ENCODE measurements at regions of chr1 and their contacts with region 1.

Region 1: GRCh38 chr1:92994105-92994712 is 32.9 kb upstream of the DIPK1A start:
- DNase-seq: peak; percentile 20 to 91 (median 68)
- ATAC-seq: peak; percentile 92
- H3K4me3 ChIP-seq: no peak overlapping the region
- H3K4me3 Mint-ChIP-seq: peak overlapping the region; percentile 56
- H3K27ac ChIP-seq: no peak overlapping the region
- H3K27ac Mint-ChIP-seq: peak overlapping the region; percentile 73
- H3K4me1 ChIP-seq: peaks cover 47% of the 10 kb centered on the region
- H3K4me1 Mint-ChIP-seq: peaks cover 48% of the 10 kb centered on the region
- H3K27me3 ChIP-seq: no peaks in the 10 kb centered on the region
- H3K27me3 Mint-ChIP-seq: no peaks in the 10 kb centered on the region
- CTCF ChIP-seq: peak; percentile 91

Region 2: GRCh38 chr1:92298573-92299476 is 695.4 kb before region 1 on chr1 and contains the starts of genes GLMN and RPAP2:
- CTCF ChIA-PET with region 1: interaction called, 3 read pairs
- POLR2A ChIA-PET with region 1: no interaction called
- intact Hi-C with region 1: loop called in 1 of 2 experiments (anchors 10 kb)
- DNase-seq: peak; percentile 40 to 89 (median 60)
- ATAC-seq: peak; percentile 96
- H3K4me3 ChIP-seq: peak within 1 kb of the TSS; percentile 98
- H3K4me3 Mint-ChIP-seq: peak within 1 kb of the TSS; percentile 100
- H3K27ac ChIP-seq: peak within 1 kb of the TSS; percentile 86 to 93
- H3K27ac Mint-ChIP-seq: peak within 1 kb of the TSS; percentile 96
- H3K4me1 ChIP-seq: peaks cover 12% of the 10 kb centered on the region
- H3K4me1 Mint-ChIP-seq: peaks cover 54% of the 10 kb centered on the region
- H3K27me3 ChIP-seq: no peaks in the 10 kb centered on the region
- H3K27me3 Mint-ChIP-seq: no peaks in the 10 kb centered on the region
- CTCF ChIP-seq: no peak
- total RNA-seq, gene GLMN: 7.7 to 11.7 TPM
- total RNA-seq, gene RPAP2: 23.4 to 26.5 TPM

Region 3: GRCh38 chr1:92317836-92318493 is 676.2 kb before region 1 on chr1:
- CTCF ChIA-PET with region 1: no interaction called
- POLR2A ChIA-PET with region 1: no interaction called
- intact Hi-C with region 1: no loop called
- DNase-seq: peak in 4 of 14 experiments; percentile 11 to 72 (median 60)
- ATAC-seq: peak; percentile 39
- H3K4me3 ChIP-seq: no peak overlapping the region
- H3K4me3 Mint-ChIP-seq: peak overlapping the region; percentile 30
- H3K27ac ChIP-seq: peak overlapping the region in 1 of 2 donors; percentile 40
- H3K27ac Mint-ChIP-seq: peak overlapping the region; percentile 85
- H3K4me1 ChIP-seq: peaks cover 38% of the 10 kb centered on the region
- H3K4me1 Mint-ChIP-seq: peaks cover 59% of the 10 kb centered on the region
- H3K27me3 ChIP-seq: no peaks in the 10 kb centered on the region
- H3K27me3 Mint-ChIP-seq: no peaks in the 10 kb centered on the region
- CTCF ChIP-seq: no peak

Region 4: GRCh38 chr1:92792340-92792782 is 201.8 kb before region 1 on chr1:
- CTCF ChIA-PET with region 1: no interaction called
- POLR2A ChIA-PET with region 1: no interaction called
- intact Hi-C with region 1: no loop called
- DNase-seq: no peak
- ATAC-seq: no peak
- H3K4me3 ChIP-seq: no peak overlapping the region
- H3K4me3 Mint-ChIP-seq: no peak overlapping the region
- H3K27ac ChIP-seq: no peak overlapping the region
- H3K27ac Mint-ChIP-seq: no peak overlapping the region
- H3K4me1 ChIP-seq: no peaks in the 10 kb centered on the region
- H3K4me1 Mint-ChIP-seq: no peaks in the 10 kb centered on the region
- H3K27me3 ChIP-seq: peaks cover 4 to 8% of the 10 kb centered on the region in 2 experiments
- H3K27me3 Mint-ChIP-seq: peaks cover 32% of the 10 kb centered on the region
- CTCF ChIP-seq: no peak

Region 5: GRCh38 chr1:92858564-92859399 is 135.4 kb before region 1 on chr1:
- CTCF ChIA-PET with region 1: interaction called, 47 read pairs
- POLR2A ChIA-PET with region 1: interaction called, 12 read pairs
- intact Hi-C with region 1: loop called (anchors 1 kb)
- DNase-seq: peak in 10 of 14 experiments; percentile 22 to 88 (median 44)
- ATAC-seq: peak; percentile 96
- H3K4me3 ChIP-seq: peak overlapping the region; percentile 34
- H3K4me3 Mint-ChIP-seq: peak overlapping the region; percentile 52
- H3K27ac ChIP-seq: peak overlapping the region in 1 of 2 donors; percentile 1
- H3K27ac Mint-ChIP-seq: peak overlapping the region; percentile 72
- H3K4me1 ChIP-seq: peaks cover 12% of the 10 kb centered on the region
- H3K4me1 Mint-ChIP-seq: peaks cover 14% of the 10 kb centered on the region
- H3K27me3 ChIP-seq: no peaks in the 10 kb centered on the region
- H3K27me3 Mint-ChIP-seq: no peaks in the 10 kb centered on the region
- CTCF ChIP-seq: peak; percentile 99

Region 6: GRCh38 chr1:92951141-92951582 is 43.0 kb before region 1 on chr1:
- CTCF ChIA-PET with region 1: interaction called, 105 read pairs
- POLR2A ChIA-PET with region 1: interaction called, 5 read pairs
- intact Hi-C with region 1: loop called (anchors 5 kb)
- DNase-seq: peak in 4 of 14 experiments; percentile 49 to 75 (median 71)
- ATAC-seq: peak; percentile 92
- H3K4me3 ChIP-seq: no peak overlapping the region
- H3K4me3 Mint-ChIP-seq: no peak overlapping the region
- H3K27ac ChIP-seq: no peak overlapping the region
- H3K27ac Mint-ChIP-seq: no peak overlapping the region
- H3K4me1 ChIP-seq: peaks cover 30% of the 10 kb centered on the region
- H3K4me1 Mint-ChIP-seq: peaks cover 45% of the 10 kb centered on the region
- H3K27me3 ChIP-seq: no peaks in the 10 kb centered on the region
- H3K27me3 Mint-ChIP-seq: no peaks in the 10 kb centered on the region
- CTCF ChIP-seq: peak; percentile 23

Region 7: GRCh38 chr1:92980732-92981647 is 13.2 kb before region 1 on chr1:
- CTCF ChIA-PET with region 1: interaction called, 32 read pairs
- POLR2A ChIA-PET with region 1: interaction called, 25 read pairs
- intact Hi-C with region 1: loop called in 1 of 2 experiments (anchors 2 kb)
- DNase-seq: peak in 12 of 14 experiments; percentile 26 to 92 (median 45)
- ATAC-seq: peak; percentile 93
- H3K4me3 ChIP-seq: no peak overlapping the region
- H3K4me3 Mint-ChIP-seq: peak overlapping the region; percentile 67
- H3K27ac ChIP-seq: peak overlapping the region; percentile 85 to 89
- H3K27ac Mint-ChIP-seq: peak overlapping the region; percentile 97
- H3K4me1 ChIP-seq: peaks cover 41% of the 10 kb centered on the region
- H3K4me1 Mint-ChIP-seq: peaks cover 41% of the 10 kb centered on the region
- H3K27me3 ChIP-seq: no peaks in the 10 kb centered on the region
- H3K27me3 Mint-ChIP-seq: no peaks in the 10 kb centered on the region
- CTCF ChIP-seq: no peak

Measured in CD4-positive, alpha-beta T cell (primary cell).